ENCODE measurements at regions of chr7 and their contacts with region 1.

Region 1: GRCh38 chr7:92134271-92135051 is at the start of gene CYP51A1:
- DNase-seq: peak; percentile 87 to 97 (median 94)
- ATAC-seq: peak; percentile 86
- H3K4me3 ChIP-seq: peak within 1 kb of the TSS; percentile 72 to 94
- H3K4me3 Mint-ChIP-seq: peak within 1 kb of the TSS; percentile 100
- H3K27ac ChIP-seq: peak within 1 kb of the TSS; percentile 88 to 93
- H3K27ac Mint-ChIP-seq: peak within 1 kb of the TSS; percentile 100
- H3K4me1 ChIP-seq: peaks cover 11% of the 10 kb centered on the region
- H3K4me1 Mint-ChIP-seq: peaks cover 32% of the 10 kb centered on the region
- H3K27me3 ChIP-seq: no peaks in the 10 kb centered on the region
- H3K27me3 Mint-ChIP-seq: no peaks in the 10 kb centered on the region
- CTCF ChIP-seq: no peak
- total RNA-seq, gene CYP51A1: 44.3 to 44.4 TPM

Region 2: DNA sequence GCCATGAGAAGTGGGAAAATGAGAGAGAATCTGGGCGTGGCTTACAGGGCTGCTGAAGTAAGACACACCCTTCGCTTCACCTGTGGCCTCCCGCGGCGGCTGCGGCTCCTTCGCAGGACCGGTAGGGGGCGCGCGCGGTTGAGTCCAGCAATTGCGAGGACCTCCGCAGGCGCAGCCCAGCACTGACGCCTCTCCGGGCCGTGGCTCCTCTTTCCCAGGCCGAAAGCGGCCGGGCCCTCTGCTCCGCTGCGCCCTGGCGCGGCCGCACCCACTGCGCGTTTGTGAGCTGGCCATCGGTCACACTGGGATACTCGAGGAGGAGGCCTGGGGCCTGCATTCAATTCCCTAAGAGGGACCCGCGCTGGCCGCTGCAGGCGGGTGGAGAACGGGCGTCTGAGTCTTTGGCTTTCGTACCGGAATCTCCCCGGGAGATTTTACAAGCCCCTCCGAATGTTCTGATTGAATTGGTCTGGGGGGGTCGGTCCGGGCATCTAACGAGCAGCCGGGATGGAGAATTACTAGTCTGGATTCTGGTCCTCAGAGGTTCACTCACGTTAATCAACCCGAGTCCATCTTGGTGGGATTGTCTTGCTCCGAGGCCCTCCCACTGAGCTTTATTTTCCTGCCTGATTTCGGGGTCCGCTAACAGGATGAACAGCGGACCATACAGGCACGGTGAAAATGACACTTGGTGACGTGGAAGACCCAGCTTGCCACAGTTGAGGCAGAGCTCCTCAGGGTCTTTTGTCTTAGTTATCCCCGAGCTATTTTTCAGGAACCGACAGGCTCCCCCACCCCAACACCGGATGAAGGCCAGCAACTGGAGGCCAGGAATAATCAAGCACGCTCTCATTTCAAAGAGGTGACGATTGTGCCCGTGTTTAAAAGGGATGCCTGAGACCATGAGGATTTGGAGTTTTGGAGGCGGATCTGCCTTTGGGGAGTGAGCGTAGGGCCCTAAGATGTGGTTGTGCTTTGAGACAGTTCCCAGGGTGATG is 44.8 kb after region 1 on chr7 and contains the start of gene LRRD1:
- CTCF ChIA-PET with region 1: no interaction called
- POLR2A ChIA-PET with region 1: interaction called, 4 read pairs
- intact Hi-C with region 1: loop called (anchors 1 to 2 kb)
- DNase-seq: peak; percentile 81 to 95 (median 87)
- ATAC-seq: peak; percentile 100
- H3K4me3 ChIP-seq: peak within 1 kb of the TSS; percentile 58 to 64
- H3K4me3 Mint-ChIP-seq: peak within 1 kb of the TSS; percentile 82
- H3K27ac ChIP-seq: peak within 1 kb of the TSS in 1 of 2 experiments; percentile 24
- H3K27ac Mint-ChIP-seq: no peak within 1 kb of the TSS
- H3K4me1 ChIP-seq: peaks cover 3% of the 10 kb centered on the region
- H3K4me1 Mint-ChIP-seq: peaks cover 5% of the 10 kb centered on the region
- H3K27me3 ChIP-seq: no peaks in the 10 kb centered on the region
- H3K27me3 Mint-ChIP-seq: peaks cover 5% of the 10 kb centered on the region
- CTCF ChIP-seq: peak; percentile 97
- total RNA-seq, gene LRRD1: not detected

Region 3: DNA sequence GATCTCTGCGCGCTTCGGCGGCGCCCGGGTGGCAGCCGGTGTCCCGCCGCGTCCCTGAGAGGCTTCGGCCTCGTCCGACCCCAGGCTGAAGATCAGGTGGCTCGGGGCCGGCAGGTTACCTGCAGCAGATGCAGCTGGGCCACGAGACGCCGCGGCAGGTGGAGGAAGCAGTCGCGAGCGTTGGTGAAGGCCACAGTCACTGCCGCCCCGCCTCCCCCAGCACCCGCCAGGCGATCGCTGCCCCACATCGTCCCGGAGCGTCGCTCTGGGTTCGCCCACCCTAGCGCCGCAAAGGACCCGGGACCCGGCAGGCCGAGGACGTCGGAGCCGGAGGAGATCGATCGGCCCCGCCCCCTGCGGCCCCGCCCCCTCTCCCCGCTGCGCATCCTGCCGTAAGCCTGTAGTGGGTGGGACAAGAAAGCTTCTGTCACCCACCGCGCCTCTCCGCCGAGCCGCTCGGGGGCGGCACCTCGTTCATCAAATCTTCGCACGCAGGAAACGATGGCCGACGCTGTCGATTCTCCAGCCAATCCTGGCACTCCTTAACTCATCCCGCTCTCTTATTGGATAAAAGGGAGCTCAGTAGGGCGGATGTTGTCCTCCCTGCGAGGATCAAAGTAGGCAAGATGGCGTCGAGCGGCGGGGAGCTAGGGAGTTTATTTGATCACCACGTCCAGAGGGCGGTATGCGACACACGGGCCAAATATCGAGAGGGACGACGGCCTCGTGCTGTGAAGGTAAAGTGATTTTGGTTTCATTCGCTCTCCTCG is 393.9 kb after region 1 on chr7 and contains the starts of genes PEX1 and RBM48:
- CTCF ChIA-PET with region 1: no interaction called
- POLR2A ChIA-PET with region 1: interaction called, 12 read pairs
- intact Hi-C with region 1: loop called (anchors 1 to 5 kb)
- DNase-seq: peak; percentile 90 to 99 (median 94)
- ATAC-seq: peak; percentile 89
- H3K4me3 ChIP-seq: peak within 1 kb of the TSS; percentile 94 to 95
- H3K4me3 Mint-ChIP-seq: peak within 1 kb of the TSS; percentile 91
- H3K27ac ChIP-seq: peak within 1 kb of the TSS; percentile 91 to 98
- H3K27ac Mint-ChIP-seq: peak within 1 kb of the TSS; percentile 98
- H3K4me1 ChIP-seq: peaks cover 22% of the 10 kb centered on the region
- H3K4me1 Mint-ChIP-seq: peaks cover 51% of the 10 kb centered on the region
- H3K27me3 ChIP-seq: no peaks in the 10 kb centered on the region
- H3K27me3 Mint-ChIP-seq: no peaks in the 10 kb centered on the region
- CTCF ChIP-seq: no peak
- total RNA-seq, gene PEX1: 17.8 to 18.1 TPM
- total RNA-seq, gene RBM48: 52.7 to 54.6 TPM

Region 4: GRCh38 chr7:92590711-92591310 is 456.4 kb after region 1 on chr7:
- CTCF ChIA-PET with region 1: no interaction called
- POLR2A ChIA-PET with region 1: interaction called, 3 read pairs
- intact Hi-C with region 1: loop called (anchors 1 to 5 kb)
- DNase-seq: peak in 1 of 9 experiments; percentile 11
- ATAC-seq: no peak
- H3K4me3 ChIP-seq: peak overlapping the region; percentile 71 to 74
- H3K4me3 Mint-ChIP-seq: peak overlapping the region; percentile 96
- H3K27ac ChIP-seq: no peak overlapping the region
- H3K27ac Mint-ChIP-seq: no peak overlapping the region
- H3K4me1 ChIP-seq: peaks cover 32% of the 10 kb centered on the region
- H3K4me1 Mint-ChIP-seq: peaks cover 46% of the 10 kb centered on the region
- H3K27me3 ChIP-seq: no peaks in the 10 kb centered on the region
- H3K27me3 Mint-ChIP-seq: no peaks in the 10 kb centered on the region
- CTCF ChIP-seq: no peak

Region 5: GRCh38 chr7:93117852-93118530 is 983.5 kb after region 1 on chr7 and contains the start of gene SAMD9:
- CTCF ChIA-PET with region 1: no interaction called
- POLR2A ChIA-PET with region 1: no interaction called
- intact Hi-C with region 1: loop called (anchors 5 to 10 kb)
- DNase-seq: peak; percentile 18 to 91 (median 60)
- ATAC-seq: peak; percentile 99
- H3K4me3 ChIP-seq: peak within 1 kb of the TSS; percentile 61 to 64
- H3K4me3 Mint-ChIP-seq: peak within 1 kb of the TSS; percentile 80
- H3K27ac ChIP-seq: peak within 1 kb of the TSS; percentile 58 to 81
- H3K27ac Mint-ChIP-seq: peak within 1 kb of the TSS; percentile 84
- H3K4me1 ChIP-seq: peaks cover 28% of the 10 kb centered on the region
- H3K4me1 Mint-ChIP-seq: peaks cover 47% of the 10 kb centered on the region
- H3K27me3 ChIP-seq: no peaks in the 10 kb centered on the region
- H3K27me3 Mint-ChIP-seq: no peaks in the 10 kb centered on the region
- CTCF ChIP-seq: no peak
- total RNA-seq, gene SAMD9: 23.5 to 23.8 TPM

Region 6: DNA sequence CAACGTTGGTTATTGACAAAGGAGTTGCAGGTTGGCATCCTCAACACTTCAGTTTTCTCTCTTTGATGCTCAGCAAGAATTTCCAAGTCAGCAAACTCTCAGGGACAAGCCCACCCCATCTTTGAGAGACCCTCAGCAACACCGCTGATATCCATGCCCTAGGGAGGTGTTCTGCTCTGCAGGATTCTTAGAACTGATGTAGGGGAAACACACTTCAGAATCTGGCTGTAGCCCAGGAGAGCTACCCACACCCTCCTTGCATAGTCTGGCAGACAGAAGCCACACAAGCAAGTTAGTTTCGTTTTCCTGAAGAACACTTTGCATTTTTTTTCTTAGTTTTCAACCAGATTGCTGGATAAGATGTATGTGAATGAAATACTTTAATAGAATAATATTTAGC is 1012.9 kb after region 1 on chr7:
- CTCF ChIA-PET with region 1: no interaction called
- POLR2A ChIA-PET with region 1: no interaction called
- intact Hi-C with region 1: no loop called
- DNase-seq: peak in 8 of 9 experiments; percentile 4 to 72 (median 44)
- ATAC-seq: peak; percentile 82
- H3K4me3 ChIP-seq: peak overlapping the region; percentile 61 to 68
- H3K4me3 Mint-ChIP-seq: peak overlapping the region; percentile 94
- H3K27ac ChIP-seq: peak overlapping the region; percentile 44 to 79
- H3K27ac Mint-ChIP-seq: peak overlapping the region; percentile 90
- H3K4me1 ChIP-seq: peaks cover 23% of the 10 kb centered on the region
- H3K4me1 Mint-ChIP-seq: peaks cover 33% of the 10 kb centered on the region
- H3K27me3 ChIP-seq: no peaks in the 10 kb centered on the region
- H3K27me3 Mint-ChIP-seq: no peaks in the 10 kb centered on the region
- CTCF ChIP-seq: no peak